CD8-positive, alpha-beta T cell (primary cell): ENCODE measurements at regions of chr2 and their contacts with region 1.

Region 1: DNA sequence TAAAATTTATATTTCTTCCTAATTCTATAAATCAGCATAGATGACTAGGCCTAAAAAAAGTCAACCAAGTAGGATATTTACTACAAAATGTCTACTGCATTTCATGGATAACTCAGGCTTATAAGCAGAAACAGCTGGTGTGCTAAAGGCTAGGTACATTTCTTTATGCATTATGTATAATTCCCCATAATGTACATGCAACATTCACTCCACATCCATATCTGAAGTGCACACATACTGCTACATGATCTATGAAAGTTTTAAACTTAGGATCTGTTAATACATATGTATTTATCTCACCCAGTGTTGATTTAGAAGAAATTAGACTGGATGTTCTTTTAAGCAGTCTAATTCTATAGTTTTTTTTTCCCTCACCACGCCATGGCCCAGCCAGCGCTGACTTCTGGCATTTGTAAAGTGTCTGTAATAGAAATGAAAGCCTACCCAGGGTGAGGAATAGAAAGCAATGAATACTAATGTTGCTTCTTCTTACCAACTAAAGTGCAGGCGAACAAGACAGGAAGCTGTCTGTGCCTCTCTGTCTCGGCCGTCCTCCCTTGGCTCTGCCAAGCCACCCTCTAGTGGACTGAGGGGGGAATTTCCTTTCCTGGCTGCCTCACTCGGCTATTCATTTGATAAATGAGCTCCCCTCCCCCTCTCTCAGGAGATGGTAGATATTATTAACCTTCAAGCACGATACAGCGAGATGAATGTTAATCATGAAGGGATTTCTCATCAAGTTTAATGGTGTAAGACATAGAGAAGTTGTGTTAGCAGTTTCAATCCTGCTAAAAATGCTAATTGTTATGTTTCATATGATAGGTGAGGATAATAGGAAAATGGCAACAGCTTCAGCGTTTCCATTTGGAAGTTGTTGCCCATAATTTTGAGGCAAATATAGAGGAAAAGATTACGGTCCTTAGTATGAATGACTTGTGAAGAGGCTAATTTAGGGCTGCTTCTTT is 384.5 kb downstream of the MTX2 start:
- DNase-seq: peak in 5 of 9 experiments; percentile 22 to 55 (median 32)
- ATAC-seq: no peak
- H3K4me3 ChIP-seq: no peak overlapping the region
- H3K4me3 Mint-ChIP-seq: no peak overlapping the region
- H3K27ac ChIP-seq: no peak overlapping the region
- H3K27ac Mint-ChIP-seq: no peak overlapping the region
- H3K4me1 ChIP-seq: peaks cover 12% of the 10 kb centered on the region
- H3K4me1 Mint-ChIP-seq: peaks cover 14% of the 10 kb centered on the region
- H3K27me3 ChIP-seq: peaks cover 0 to 4% of the 10 kb centered on the region in 2 experiments
- H3K27me3 Mint-ChIP-seq: peaks cover 36% of the 10 kb centered on the region
- CTCF ChIP-seq: peak; percentile 42

Region 2: DNA sequence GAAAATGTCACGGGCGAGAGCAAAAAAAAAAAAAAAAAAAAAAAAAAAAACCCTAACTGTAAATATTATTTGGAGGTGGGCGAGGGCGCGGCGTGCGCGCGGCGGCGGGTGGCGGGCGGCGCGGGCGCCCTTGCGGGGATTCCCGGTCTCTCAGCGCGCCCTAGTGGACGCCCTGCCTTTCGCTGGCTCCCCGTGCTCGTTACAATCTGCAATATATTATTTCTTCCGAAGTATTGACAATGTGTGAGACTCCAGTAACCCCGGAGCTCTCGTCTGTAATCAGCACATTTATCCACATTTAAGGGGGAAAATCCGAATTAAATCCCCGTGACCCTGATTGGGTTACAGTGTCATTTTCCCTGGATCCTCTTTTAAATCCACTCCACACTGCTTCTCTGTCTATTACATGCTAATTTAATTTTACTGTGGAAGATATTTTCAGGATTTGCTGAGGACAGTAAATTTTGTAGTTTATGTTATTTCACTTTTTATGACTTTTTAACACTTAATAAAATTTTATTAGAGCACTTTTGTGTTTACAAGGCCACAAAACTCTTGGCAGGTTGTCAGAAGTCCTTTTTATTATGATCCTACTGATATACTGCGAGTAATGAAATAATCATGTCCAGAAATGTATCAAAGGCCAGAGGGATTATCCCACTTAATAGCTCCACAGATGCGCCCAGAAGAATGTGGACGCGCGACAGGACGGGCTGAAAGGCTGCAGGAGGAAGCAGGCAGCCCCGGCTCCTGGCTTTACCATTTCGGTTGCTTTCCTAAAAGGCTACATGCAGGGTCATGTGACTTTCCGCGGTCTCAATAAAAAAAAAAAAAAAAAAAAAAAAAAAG is 15.4 kb before region 1 on chr2:
- CTCF ChIA-PET with region 1: interaction called, 25 read pairs
- POLR2A ChIA-PET with region 1: no interaction called
- intact Hi-C with region 1: no loop called
- DNase-seq: peak; percentile 19 to 74 (median 59)
- ATAC-seq: peak; percentile 87
- H3K4me3 ChIP-seq: peak overlapping the region; percentile 48 to 55
- H3K4me3 Mint-ChIP-seq: peak overlapping the region; percentile 71
- H3K27ac ChIP-seq: no peak overlapping the region
- H3K27ac Mint-ChIP-seq: no peak overlapping the region
- H3K4me1 ChIP-seq: no peaks in the 10 kb centered on the region
- H3K4me1 Mint-ChIP-seq: peaks cover 8% of the 10 kb centered on the region
- H3K27me3 ChIP-seq: peaks cover 9 to 23% of the 10 kb centered on the region in 2 experiments
- H3K27me3 Mint-ChIP-seq: peaks cover 66% of the 10 kb centered on the region
- CTCF ChIP-seq: peak; percentile 76

Region 3: DNA sequence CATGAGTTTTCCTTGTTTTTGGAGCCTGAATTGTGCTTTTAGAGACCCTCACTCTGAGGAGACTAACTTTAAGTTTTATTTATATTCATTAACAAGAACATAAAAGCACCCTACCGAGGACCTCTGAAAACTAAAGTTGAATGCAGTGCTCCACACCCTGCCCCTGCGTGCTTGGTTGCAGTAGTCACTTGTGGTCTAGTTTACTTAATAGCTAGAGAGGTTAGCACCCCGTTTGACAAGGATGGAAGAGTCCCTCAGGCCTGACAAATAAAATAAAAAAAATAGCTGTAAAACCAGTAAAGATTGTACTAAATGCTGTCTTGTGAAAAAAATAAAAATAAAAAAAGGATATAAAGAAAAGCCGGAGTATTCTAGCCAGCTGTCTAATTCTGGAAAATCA is 10.7 kb after region 1 on chr2:
- CTCF ChIA-PET with region 1: interaction called, 17 read pairs
- POLR2A ChIA-PET with region 1: no interaction called
- intact Hi-C with region 1: no loop called
- DNase-seq: no peak
- ATAC-seq: no peak
- H3K4me3 ChIP-seq: no peak overlapping the region
- H3K4me3 Mint-ChIP-seq: no peak overlapping the region
- H3K27ac ChIP-seq: no peak overlapping the region
- H3K27ac Mint-ChIP-seq: no peak overlapping the region
- H3K4me1 ChIP-seq: no peaks in the 10 kb centered on the region
- H3K4me1 Mint-ChIP-seq: no peaks in the 10 kb centered on the region
- H3K27me3 ChIP-seq: no peaks in the 10 kb centered on the region
- H3K27me3 Mint-ChIP-seq: peaks cover 37% of the 10 kb centered on the region
- CTCF ChIP-seq: no peak

Region 4: GRCh38 chr2:176758426-176758825 is 104.7 kb after region 1 on chr2:
- CTCF ChIA-PET with region 1: no interaction called
- POLR2A ChIA-PET with region 1: no interaction called
- intact Hi-C with region 1: no loop called
- DNase-seq: no peak
- ATAC-seq: no peak
- H3K4me3 ChIP-seq: no peak overlapping the region
- H3K4me3 Mint-ChIP-seq: no peak overlapping the region
- H3K27ac ChIP-seq: no peak overlapping the region
- H3K27ac Mint-ChIP-seq: no peak overlapping the region
- H3K4me1 ChIP-seq: no peaks in the 10 kb centered on the region
- H3K4me1 Mint-ChIP-seq: no peaks in the 10 kb centered on the region
- H3K27me3 ChIP-seq: peaks cover 0 to 3% of the 10 kb centered on the region in 2 experiments
- H3K27me3 Mint-ChIP-seq: peaks cover 12% of the 10 kb centered on the region
- CTCF ChIP-seq: no peak

Region 5: DNA sequence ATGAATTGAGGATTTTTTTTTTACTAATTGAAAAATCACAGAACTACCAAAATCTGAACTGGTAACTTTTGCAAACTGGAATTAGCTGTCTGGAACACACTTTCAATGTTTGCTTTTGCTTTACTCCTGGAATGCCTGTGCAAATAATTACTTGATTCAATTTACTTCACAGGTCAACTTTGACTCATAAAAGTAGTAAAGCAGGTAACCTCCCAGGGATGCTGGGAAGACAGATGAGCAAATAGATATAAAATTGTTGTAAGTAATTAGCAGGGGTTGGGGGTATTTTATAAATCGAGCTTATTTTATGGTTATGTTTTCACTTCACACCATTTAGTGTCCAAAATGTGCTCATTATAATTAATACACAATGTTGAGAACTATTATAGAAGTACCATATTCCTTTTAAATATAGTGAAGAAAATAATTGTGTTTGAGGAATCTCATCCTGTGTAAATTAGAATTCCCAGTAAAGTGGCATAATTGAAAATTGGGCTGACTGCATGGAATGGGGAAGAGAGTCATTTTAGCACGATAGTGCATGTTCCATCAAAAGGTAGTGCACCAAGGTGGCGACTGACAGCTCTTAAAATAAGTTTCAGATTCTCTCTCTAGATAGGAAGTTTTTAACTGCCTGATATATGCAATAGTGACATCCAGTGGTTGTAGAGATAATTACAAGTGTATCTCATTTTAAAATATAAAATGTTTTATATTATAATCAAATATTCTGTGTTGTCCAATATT is 160.7 kb after region 1 on chr2:
- CTCF ChIA-PET with region 1: interaction called, 6 read pairs
- POLR2A ChIA-PET with region 1: no interaction called
- intact Hi-C with region 1: loop called in 1 of 2 experiments (anchors 5 kb)
- DNase-seq: peak in 2 of 9 experiments; percentile 51 to 65
- ATAC-seq: peak; percentile 79
- H3K4me3 ChIP-seq: no peak overlapping the region
- H3K4me3 Mint-ChIP-seq: peak overlapping the region; percentile 19
- H3K27ac ChIP-seq: no peak overlapping the region
- H3K27ac Mint-ChIP-seq: no peak overlapping the region
- H3K4me1 ChIP-seq: peaks cover 45% of the 10 kb centered on the region
- H3K4me1 Mint-ChIP-seq: peaks cover 42% of the 10 kb centered on the region
- H3K27me3 ChIP-seq: no peaks in the 10 kb centered on the region
- H3K27me3 Mint-ChIP-seq: no peaks in the 10 kb centered on the region
- CTCF ChIP-seq: peak; percentile 95

Region 6: GRCh38 chr2:177419274-177419673 is 765.5 kb after region 1 on chr2:
- CTCF ChIA-PET with region 1: no interaction called
- POLR2A ChIA-PET with region 1: no interaction called
- intact Hi-C with region 1: loop called in 1 of 2 experiments (anchors 10 kb)
- DNase-seq: no peak
- ATAC-seq: no peak
- H3K4me3 ChIP-seq: no peak overlapping the region
- H3K4me3 Mint-ChIP-seq: no peak overlapping the region
- H3K27ac ChIP-seq: no peak overlapping the region
- H3K27ac Mint-ChIP-seq: no peak overlapping the region
- H3K4me1 ChIP-seq: no peaks in the 10 kb centered on the region
- H3K4me1 Mint-ChIP-seq: peaks cover 27% of the 10 kb centered on the region
- H3K27me3 ChIP-seq: no peaks in the 10 kb centered on the region
- H3K27me3 Mint-ChIP-seq: no peaks in the 10 kb centered on the region
- CTCF ChIP-seq: no peak